ENCODE measurements at regions of chr5 and their contacts with region 1.

Region 1: DNA sequence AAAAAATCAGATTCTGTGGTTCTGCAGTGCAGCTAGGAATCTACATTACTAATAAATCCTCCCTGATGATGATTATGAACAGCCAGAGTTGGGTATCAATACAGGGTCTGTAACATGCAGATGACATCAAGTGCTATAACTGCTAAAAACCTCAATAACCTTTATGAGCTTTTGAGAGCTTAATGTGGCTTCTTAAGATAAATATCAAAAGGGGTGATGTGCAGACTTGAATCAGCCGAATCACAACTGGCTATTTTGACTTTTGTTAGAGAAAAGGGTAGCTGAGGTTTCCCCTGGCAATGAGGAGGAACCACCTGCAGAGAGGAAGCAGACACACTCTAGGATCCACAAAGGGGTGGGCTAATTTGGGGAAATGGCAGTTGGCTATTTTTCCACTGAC is 30.2 kb downstream of the CAPSL start:
- DNase-seq: no peak
- H3K4me3 Mint-ChIP-seq: no peak overlapping the region
- H3K27ac Mint-ChIP-seq: no peak overlapping the region
- H3K4me1 Mint-ChIP-seq: peaks cover 60% of the 10 kb centered on the region
- H3K27me3 Mint-ChIP-seq: no peaks in the 10 kb centered on the region

Region 2: GRCh38 chr5:35803191-35803651 is 105.0 kb before region 1 on chr5:
- intact Hi-C with region 1: no loop called
- DNase-seq: no peak
- H3K4me3 Mint-ChIP-seq: no peak overlapping the region
- H3K27ac Mint-ChIP-seq: peak overlapping the region; percentile 40
- H3K4me1 Mint-ChIP-seq: peaks cover 68% of the 10 kb centered on the region
- H3K27me3 Mint-ChIP-seq: peaks cover 2% of the 10 kb centered on the region

Region 3: DNA sequence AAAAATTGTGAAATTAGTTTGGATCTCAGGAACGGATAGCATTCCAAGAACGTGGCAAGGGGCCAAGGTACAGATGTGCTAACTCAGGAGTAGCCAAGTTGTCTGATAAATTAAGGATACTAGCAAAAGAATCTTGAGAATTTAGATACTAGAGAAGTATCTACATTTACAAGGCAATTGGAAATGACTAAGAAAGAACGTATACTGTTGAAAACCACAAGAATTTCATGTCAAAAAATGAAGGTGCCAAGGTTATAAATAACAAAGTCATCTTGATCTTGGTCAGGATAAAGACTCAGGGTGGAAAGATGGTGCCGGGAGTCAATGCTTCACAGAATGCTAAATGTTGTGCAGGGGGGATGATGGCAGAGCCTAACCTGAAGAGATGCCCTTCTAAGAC is 11.0 kb after region 1 on chr5:
- intact Hi-C with region 1: loop called (anchors 1 kb)
- DNase-seq: no peak
- H3K4me3 Mint-ChIP-seq: no peak overlapping the region
- H3K27ac Mint-ChIP-seq: peak overlapping the region; percentile 81
- H3K4me1 Mint-ChIP-seq: peaks cover 35% of the 10 kb centered on the region
- H3K27me3 Mint-ChIP-seq: peaks cover 3% of the 10 kb centered on the region

Measured in activated T-helper 1 cell treated with anti-CD3 and anti-CD28 coated beads, Interleukin-12 subunit alpha, Interleukin-12 subunit beta, Interleukin-2, Interleukin-4 antibody, amounts not matched to agents 30 ng/mL and 10 ng/mL and 1 ng/mL, durations not matched to agents 14 hours and 24 hours and 36 hours (primary cell).